ENCODE measurements at regions of chr12 and their contacts with region 1.

Region 1: DNA sequence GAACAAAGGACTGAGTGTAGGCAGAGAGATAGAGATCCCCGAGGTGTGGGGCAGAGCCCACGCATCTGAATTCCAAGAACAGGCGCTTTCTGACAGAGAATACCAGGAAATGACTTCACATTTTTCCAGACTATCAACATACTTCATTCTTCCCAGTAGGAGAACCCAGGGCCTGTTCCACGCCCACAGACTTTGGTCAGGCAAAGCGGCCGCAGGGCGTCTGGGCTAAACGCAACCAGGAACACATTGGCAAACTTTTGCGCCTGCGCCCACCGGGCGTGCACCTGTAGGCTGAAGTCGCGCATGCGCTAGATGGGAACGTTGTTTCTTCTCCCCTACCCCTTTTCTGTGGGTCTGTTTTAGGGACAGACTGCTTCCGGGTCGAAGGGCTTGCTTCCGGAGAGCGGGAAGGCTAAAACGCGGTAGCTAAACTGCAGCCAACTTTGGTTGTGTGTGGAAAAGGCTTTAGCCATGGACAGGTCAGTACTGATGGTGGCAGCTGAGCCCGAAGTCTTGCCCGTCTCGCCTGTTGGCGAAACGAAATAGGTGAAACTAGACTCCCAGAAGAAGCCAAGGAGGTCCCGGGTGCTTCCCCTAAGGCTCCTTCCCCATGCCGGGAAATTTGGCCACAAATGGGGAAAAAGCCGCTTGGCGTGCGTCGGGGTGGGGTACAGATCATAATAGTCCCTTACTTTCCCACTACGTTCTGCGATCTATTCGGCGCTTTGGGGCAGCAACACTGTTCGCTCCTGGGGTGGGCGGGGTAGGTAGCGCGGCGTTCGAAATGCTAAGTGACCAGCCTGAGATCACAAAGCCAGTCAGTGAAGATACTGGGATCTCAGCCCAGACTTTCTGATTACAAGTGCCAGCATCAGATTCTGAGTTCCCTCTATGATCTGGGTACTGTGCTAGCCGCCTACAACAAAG is at the start of gene NUP107:
- DNase-seq: peak; percentile 100
- H3K4me3 ChIP-seq: peak within 1 kb of the TSS; percentile 64 to 82 (median 78)
- H3K27ac ChIP-seq: peak within 1 kb of the TSS; percentile 40 to 77 (median 75)
- H3K4me1 ChIP-seq: peaks cover 6 to 9% of the 10 kb centered on the region in 2 donors
- H3K27me3 ChIP-seq: no peaks in the 10 kb centered on the region
- CTCF ChIP-seq: peak in 4 of 6 experiments; percentile 9 to 38 (median 28)
- POLR2A ChIP-seq: peak in 1 of 2 donors; percentile 72
- total RNA-seq, gene NUP107: 36.1 to 83.6 (median 43.5) TPM

Region 2: GRCh38 chr12:68358532-68359485 is 328.0 kb before region 1 on chr12:
- intact Hi-C with region 1: loop called (anchors 10 kb)
- DNase-seq: peak; percentile 53 to 67
- H3K4me3 ChIP-seq: no peak overlapping the region
- H3K27ac ChIP-seq: no peak overlapping the region
- H3K4me1 ChIP-seq: peaks cover 0 to 3% of the 10 kb centered on the region in 2 donors
- H3K27me3 ChIP-seq: no peaks in the 10 kb centered on the region
- CTCF ChIP-seq: peak in 5 of 6 experiments; percentile 26 to 66 (median 62)
- POLR2A ChIP-seq: no peak